ENCODE measurements at regions of chr15 and their contacts with region 1.

Region 1: DNA sequence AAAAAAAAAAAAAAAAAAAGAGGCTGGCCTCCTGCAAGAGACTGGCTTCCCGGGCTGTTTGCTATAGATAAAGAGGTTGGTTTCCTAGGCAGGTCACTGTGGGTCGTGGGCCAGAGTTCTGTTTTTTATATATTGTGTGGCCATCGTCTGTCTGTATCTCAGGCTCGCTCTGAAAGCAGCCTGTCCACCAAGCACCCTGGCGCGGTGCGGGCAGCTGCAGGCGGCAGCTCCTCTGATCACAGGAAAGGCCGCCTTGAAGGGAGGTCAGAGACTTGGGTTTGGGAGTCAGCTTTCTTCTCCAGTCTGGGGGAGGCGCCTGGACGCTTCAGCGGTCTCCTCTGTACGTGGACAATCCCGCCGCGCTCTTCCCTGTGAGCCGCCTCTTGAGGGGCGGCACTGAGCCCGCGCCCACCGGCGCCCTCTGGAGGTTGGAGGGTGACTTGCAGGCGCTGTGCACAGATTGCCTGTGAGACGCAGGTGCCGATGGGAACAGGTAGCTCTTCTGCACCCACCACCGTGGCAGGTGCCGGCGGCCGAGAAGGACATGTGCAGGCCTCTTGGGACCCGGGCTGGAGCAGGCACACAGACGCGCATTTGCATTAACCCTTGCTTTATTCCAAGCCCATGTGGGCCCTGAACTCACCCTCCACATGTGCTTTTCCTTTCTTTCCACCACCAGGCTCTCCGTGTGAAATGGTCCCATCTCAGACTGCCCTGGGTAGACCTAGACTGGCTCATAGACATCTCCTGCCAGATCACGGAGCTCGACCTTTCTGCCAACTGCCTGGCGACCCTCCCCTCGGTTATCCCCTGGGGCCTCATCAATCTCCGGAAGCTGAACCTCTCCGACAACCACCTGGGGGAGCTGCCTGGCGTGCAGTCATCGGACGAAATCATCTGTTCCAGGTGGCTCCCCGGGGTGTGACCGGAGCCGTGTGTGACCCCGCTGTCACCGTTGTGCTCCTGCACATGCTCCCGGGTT is 89.3 kb downstream of the LRRK1 start:
- DNase-seq: peak; percentile 85 to 99 (median 92)
- ATAC-seq: peak; percentile 90 to 96 (median 93)
- H3K4me3 ChIP-seq: peak overlapping the region; percentile 21 to 59 (median 54)
- H3K27ac ChIP-seq: peak overlapping the region in 3 of 4 donors; percentile 22 to 78 (median 56)
- H3K4me1 ChIP-seq: peaks cover 0 to 7% (median 0%) of the 10 kb centered on the region in 3 donors
- H3K27me3 ChIP-seq: no peaks in the 10 kb centered on the region
- CTCF ChIP-seq: peak; percentile 96 to 97 (median 96)

Region 2: DNA sequence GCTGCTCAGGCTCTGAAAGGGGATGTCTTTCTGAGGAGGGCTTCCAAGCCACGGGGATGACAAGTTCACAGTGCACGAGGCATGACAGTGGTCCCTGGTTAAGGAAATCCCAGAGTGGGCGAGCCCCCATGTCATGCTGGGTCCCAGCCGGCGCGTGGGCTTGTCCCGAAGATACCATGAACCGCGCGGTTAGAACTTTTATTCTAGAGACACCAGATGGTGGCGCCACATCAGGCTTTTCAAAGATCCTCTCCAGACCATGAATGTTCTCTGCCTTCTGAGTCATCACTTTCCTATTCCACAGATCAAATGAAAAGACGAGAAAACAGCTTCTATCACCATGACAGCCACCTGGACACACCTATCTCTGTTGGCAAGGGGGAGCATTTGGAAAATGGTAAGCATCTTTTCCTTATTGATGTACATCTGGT is 1047.4 kb before region 1 on chr15:
- intact Hi-C with region 1: no loop called
- DNase-seq: peak in 2 of 6 donors; percentile 52 to 60
- ATAC-seq: peak; percentile 42 to 82 (median 70)
- H3K4me3 ChIP-seq: no peak overlapping the region
- H3K27ac ChIP-seq: no peak overlapping the region
- H3K4me1 ChIP-seq: no peaks in the 10 kb centered on the region
- H3K27me3 ChIP-seq: no peaks in the 10 kb centered on the region
- CTCF ChIP-seq: peak in 2 of 4 donors; percentile 7 to 11

Region 3: DNA sequence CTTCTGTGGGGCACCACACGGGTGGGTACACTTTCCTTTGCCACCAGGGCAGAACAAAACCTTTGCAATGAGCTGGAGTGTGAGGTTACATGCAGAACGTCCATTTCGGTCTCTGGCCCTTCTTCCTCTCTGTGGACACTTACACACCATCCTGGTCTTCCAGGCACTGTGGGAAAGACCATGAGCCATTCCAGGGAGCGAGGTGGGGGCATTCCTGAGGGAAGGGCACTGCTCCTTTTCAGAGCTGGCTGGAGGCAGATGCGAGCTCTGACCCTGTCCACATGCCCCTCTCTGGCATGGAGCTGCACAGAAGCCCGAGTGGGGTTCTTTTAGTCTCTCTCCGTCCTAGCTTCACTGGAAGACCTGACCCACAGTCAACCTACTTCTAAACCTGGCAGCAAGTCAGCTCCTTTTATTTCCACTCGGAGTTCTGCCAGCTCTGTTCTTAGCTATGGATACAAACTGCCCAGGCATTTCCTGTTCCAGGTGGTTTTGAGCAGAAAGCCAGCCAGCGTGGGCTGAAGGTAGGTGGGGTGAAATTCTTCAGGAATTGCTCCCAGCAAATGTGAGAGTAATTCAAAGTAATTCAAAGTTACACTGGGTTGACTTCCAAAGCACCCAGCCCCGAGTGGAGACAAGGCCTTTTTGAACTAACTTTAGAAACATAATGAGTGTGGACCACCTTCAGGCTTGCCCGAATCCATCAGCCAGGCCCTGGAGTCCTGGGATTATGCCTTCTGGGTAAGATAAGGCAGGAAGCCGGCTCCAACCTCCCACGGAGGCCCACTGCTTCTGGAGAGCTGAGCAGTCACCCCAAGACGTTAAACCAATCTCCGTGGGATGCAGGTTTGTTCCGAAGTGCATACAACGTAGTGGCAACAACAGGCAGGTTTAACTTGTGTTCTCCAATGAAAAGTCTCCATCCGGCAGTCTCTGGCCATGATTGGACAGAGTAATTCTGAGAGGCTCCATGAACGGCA is 947.9 kb before region 1 on chr15:
- intact Hi-C with region 1: no loop called
- DNase-seq: peak in 4 of 6 donors; percentile 47 to 59 (median 52)
- ATAC-seq: peak; percentile 76 to 92 (median 90)
- H3K4me3 ChIP-seq: no peak overlapping the region
- H3K27ac ChIP-seq: peak overlapping the region in 2 of 4 donors; percentile 29 to 42
- H3K4me1 ChIP-seq: peaks cover 0 to 10% (median 4%) of the 10 kb centered on the region in 3 donors
- H3K27me3 ChIP-seq: no peaks in the 10 kb centered on the region
- CTCF ChIP-seq: no peak

Region 4: GRCh38 chr15:100633763-100634075 is 374.7 kb before region 1 on chr15:
- intact Hi-C with region 1: loop called in 2 of 3 experiments (anchors 5 kb)
- DNase-seq: no peak
- ATAC-seq: no peak
- H3K4me3 ChIP-seq: no peak overlapping the region
- H3K27ac ChIP-seq: no peak overlapping the region
- H3K4me1 ChIP-seq: no peaks in the 10 kb centered on the region
- H3K27me3 ChIP-seq: no peaks in the 10 kb centered on the region
- CTCF ChIP-seq: no peak

Region 5: DNA sequence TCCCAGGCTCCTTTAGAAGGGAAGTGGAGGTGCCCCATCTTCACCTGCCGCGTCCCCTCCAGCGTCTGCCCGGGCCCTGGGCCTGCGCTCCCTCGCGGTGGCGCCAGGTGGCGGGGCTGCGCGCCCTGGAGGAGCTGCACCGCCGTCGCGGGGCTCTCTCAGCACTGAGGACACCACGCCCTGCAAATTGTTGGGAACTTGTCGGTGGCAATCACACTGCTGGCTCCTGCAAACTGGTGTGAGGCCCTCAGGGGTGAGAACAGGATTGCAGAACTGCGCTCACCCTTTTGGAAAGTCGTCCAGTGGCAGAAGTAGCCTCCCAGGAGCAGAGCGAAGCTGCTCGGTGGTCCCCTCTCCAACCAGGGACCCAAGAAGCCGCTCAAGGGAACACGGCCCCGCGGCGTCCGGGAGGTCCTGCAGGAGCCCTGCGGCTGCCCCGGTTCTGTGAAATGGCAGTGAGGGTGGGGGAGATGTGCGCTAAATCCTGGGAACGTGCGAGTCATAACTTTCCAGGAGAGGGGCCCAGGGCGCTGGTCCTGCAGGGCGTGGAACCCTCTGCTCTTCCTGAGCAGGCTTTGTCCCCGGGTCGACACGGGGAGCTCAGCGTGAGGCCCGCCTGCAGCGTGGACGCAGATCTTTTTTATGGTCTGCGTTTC is 90.3 kb before region 1 on chr15:
- intact Hi-C with region 1: loop called in 2 of 3 experiments (anchors 5 kb)
- DNase-seq: peak; percentile 77 to 93 (median 84)
- ATAC-seq: peak; percentile 93 to 98 (median 94)
- H3K4me3 ChIP-seq: peak overlapping the region; percentile 27 to 83 (median 74)
- H3K27ac ChIP-seq: peak overlapping the region; percentile 28 to 67 (median 58)
- H3K4me1 ChIP-seq: peaks cover 0 to 9% (median 5%) of the 10 kb centered on the region in 3 donors
- H3K27me3 ChIP-seq: no peaks in the 10 kb centered on the region
- CTCF ChIP-seq: peak; percentile 89 to 94 (median 91)

Measured in pancreas (tissue), 10 donors.